ENCODE measurements at regions of chr10 and their contacts with region 1.

Region 1: GRCh38 chr10:35795131-35795819 is 153.2 kb upstream of the FZD8 start:
- DNase-seq: no peak
- ATAC-seq: no peak
- H3K4me3 ChIP-seq: no peak overlapping the region
- H3K27ac ChIP-seq: no peak overlapping the region
- H3K4me1 ChIP-seq: no peaks in the 10 kb centered on the region
- H3K27me3 ChIP-seq: no peaks in the 10 kb centered on the region
- CTCF ChIP-seq: no peak
- EP300 ChIP-seq: no peak
- POLR2A ChIP-seq: no peak
- RAD21 ChIP-seq: no peak

Region 2: DNA sequence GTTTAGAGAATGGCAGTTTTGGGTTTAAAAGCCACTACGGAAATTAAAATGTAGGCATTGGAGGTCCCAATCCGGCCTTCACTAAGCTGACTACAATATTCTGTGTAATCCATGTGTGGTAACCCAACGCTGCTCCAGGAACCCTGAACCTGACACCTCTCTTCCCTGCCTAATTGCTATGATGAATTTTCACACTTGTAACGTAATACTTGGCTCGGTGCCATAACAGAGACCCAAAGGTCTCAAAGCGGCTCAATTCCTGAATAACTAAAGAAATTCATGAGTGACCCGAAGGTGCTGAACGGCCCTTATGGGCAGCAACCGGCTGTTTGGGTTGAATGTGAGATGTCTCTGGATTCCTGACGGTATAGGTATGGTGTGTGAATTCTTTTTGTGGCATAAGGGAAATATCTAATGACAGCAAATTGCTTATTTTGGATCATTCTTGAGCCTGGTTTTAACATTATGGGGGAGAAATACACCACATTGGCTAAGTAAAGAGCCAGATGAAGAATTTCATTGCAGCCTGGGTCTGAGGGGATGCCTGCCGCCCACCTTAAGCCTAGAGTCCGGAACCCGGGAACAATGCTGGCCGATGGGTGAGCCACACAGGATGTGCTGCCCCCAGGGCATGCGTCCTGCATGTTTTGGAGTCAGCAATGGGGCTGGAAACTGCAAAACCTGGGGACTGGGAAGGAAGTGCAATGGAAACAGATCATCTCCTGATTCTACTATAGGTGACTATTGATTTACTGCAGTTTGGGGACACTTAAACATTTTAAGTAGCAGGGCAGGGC is 83.5 kb before region 1 on chr10:
- CTCF ChIA-PET with region 1: no interaction called
- POLR2A ChIA-PET with region 1: no interaction called
- RAD21 ChIA-PET with region 1: no interaction called
- SMC1A ChIA-PET with region 1: no interaction called
- in situ Hi-C with region 1: no loop called
- intact Hi-C with region 1: no loop called
- DNase-seq: no peak
- ATAC-seq: no peak
- H3K4me3 ChIP-seq: no peak overlapping the region
- H3K27ac ChIP-seq: no peak overlapping the region
- H3K4me1 ChIP-seq: no peaks in the 10 kb centered on the region
- H3K27me3 ChIP-seq: no peaks in the 10 kb centered on the region
- CTCF ChIP-seq: no peak
- EP300 ChIP-seq: no peak
- POLR2A ChIP-seq: no peak
- RAD21 ChIP-seq: no peak

Region 3: GRCh38 chr10:35822316-35822715 is 27.0 kb after region 1 on chr10:
- CTCF ChIA-PET with region 1: no interaction called
- POLR2A ChIA-PET with region 1: no interaction called
- RAD21 ChIA-PET with region 1: interaction called, 4 read pairs
- SMC1A ChIA-PET with region 1: interaction called, 17 read pairs
- in situ Hi-C with region 1: no loop called
- intact Hi-C with region 1: no loop called
- DNase-seq: no peak
- ATAC-seq: peak; percentile 77
- H3K4me3 ChIP-seq: no peak overlapping the region
- H3K27ac ChIP-seq: no peak overlapping the region
- H3K4me1 ChIP-seq: no peaks in the 10 kb centered on the region
- H3K27me3 ChIP-seq: no peaks in the 10 kb centered on the region
- CTCF ChIP-seq: no peak
- EP300 ChIP-seq: no peak
- POLR2A ChIP-seq: no peak
- RAD21 ChIP-seq: no peak

Region 4: GRCh38 chr10:35933998-35934995 is 139.0 kb after region 1 on chr10:
- CTCF ChIA-PET with region 1: no interaction called
- POLR2A ChIA-PET with region 1: no interaction called
- RAD21 ChIA-PET with region 1: no interaction called
- SMC1A ChIA-PET with region 1: no interaction called
- in situ Hi-C with region 1: no loop called
- intact Hi-C with region 1: no loop called
- DNase-seq: no peak
- ATAC-seq: no peak
- H3K4me3 ChIP-seq: no peak overlapping the region
- H3K27ac ChIP-seq: no peak overlapping the region
- H3K4me1 ChIP-seq: no peaks in the 10 kb centered on the region
- H3K27me3 ChIP-seq: no peaks in the 10 kb centered on the region
- CTCF ChIP-seq: no peak
- EP300 ChIP-seq: no peak
- POLR2A ChIP-seq: no peak
- RAD21 ChIP-seq: no peak

Measured in GM12878 (cell line).